ENCODE measurements at regions of chr3 and their contacts with region 1.

Region 1: DNA sequence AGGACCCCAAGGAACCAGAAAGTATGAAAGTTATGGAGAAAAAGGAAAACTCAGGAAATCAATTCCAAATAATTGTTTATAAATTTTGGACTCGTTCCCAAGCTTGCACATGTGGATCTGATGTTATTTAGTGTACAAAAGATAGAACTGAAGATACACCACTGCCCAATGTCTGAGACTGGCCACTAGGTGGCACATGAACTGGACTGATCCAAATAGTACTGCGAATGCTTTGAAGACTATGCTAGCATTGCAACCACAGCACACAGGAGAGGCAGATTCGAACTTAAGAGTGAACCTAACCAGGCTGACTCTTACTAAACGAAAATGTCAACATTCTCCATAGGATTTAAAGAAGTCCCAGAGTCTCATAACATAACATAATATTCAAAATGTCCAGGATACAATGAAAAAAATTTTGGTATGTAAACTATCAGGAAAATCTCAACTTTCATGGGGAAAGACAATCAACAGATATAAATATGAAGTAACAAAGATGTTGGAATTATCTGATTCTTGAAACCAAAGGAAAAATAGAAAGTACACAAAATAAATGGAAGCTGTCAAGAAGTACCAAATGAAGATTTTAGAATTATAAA is 596.7 kb downstream of the FGF12 start:
- DNase-seq: peak; percentile 47
- H3K4me3 ChIP-seq: no peak overlapping the region
- H3K27ac ChIP-seq: no peak overlapping the region
- H3K4me1 ChIP-seq: no peaks in the 10 kb centered on the region
- H3K27me3 ChIP-seq: no peaks in the 10 kb centered on the region
- CTCF ChIP-seq: peak; percentile 33 to 64 (median 49)
- EP300 ChIP-seq: no peak
- POLR2A ChIP-seq: no peak

Region 2: GRCh38 chr3:191296041-191296541 is 834.5 kb before region 1 on chr3:
- in situ Hi-C with region 1: no loop called
- intact Hi-C with region 1: no loop called
- DNase-seq: peak; percentile 17
- H3K4me3 ChIP-seq: no peak overlapping the region
- H3K27ac ChIP-seq: no peak overlapping the region
- H3K4me1 ChIP-seq: no peaks in the 10 kb centered on the region
- H3K27me3 ChIP-seq: no peaks in the 10 kb centered on the region
- CTCF ChIP-seq: no peak
- EP300 ChIP-seq: no peak
- POLR2A ChIP-seq: no peak

Region 3: DNA sequence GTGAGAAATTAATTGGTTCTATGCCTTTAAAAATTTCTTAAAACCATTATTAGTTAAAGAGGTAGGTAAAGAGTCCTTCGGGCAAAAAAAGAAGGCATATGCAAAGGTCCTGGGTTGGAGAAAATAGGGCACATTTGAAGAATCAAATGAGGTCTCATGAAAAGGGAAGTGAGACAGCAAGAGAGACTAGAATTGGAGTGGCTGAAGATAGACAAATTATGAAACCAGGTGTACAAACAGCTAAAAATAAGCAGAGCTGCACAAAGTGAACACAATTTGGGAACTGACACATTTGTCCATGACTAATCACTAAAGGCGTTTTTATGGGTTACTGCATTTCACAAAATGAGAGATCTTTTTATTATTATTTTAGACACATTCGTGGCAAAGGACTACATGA is 88.5 kb before region 1 on chr3:
- in situ Hi-C with region 1: loop called in 1 of 4 experiments (anchors 25 kb)
- intact Hi-C with region 1: no loop called
- DNase-seq: no peak
- H3K4me3 ChIP-seq: no peak overlapping the region
- H3K27ac ChIP-seq: no peak overlapping the region
- H3K4me1 ChIP-seq: no peaks in the 10 kb centered on the region
- H3K27me3 ChIP-seq: no peaks in the 10 kb centered on the region
- CTCF ChIP-seq: no peak
- EP300 ChIP-seq: no peak
- POLR2A ChIP-seq: no peak

Region 4: GRCh38 chr3:192382861-192383260 is 252.2 kb after region 1 on chr3:
- in situ Hi-C with region 1: no loop called
- intact Hi-C with region 1: no loop called
- DNase-seq: no peak
- H3K4me3 ChIP-seq: no peak overlapping the region
- H3K27ac ChIP-seq: no peak overlapping the region
- H3K4me1 ChIP-seq: no peaks in the 10 kb centered on the region
- H3K27me3 ChIP-seq: no peaks in the 10 kb centered on the region
- CTCF ChIP-seq: no peak
- EP300 ChIP-seq: no peak
- POLR2A ChIP-seq: no peak

Region 5: GRCh38 chr3:193253986-193254660 is 1123.5 kb after region 1 on chr3:
- in situ Hi-C with region 1: no loop called
- intact Hi-C with region 1: no loop called
- DNase-seq: no peak
- H3K4me3 ChIP-seq: no peak overlapping the region
- H3K27ac ChIP-seq: no peak overlapping the region
- H3K4me1 ChIP-seq: no peaks in the 10 kb centered on the region
- H3K27me3 ChIP-seq: no peaks in the 10 kb centered on the region
- CTCF ChIP-seq: no peak
- EP300 ChIP-seq: no peak
- POLR2A ChIP-seq: no peak